Aorta (tissue), 5 donors: ENCODE measurements at regions of chr7 and their contacts with region 1.

Region 1: GRCh38 chr7:151110941-151111645 is 24.8 kb downstream of the AGAP3 start:
- DNase-seq: peak; percentile 83 to 93
- ATAC-seq: peak; percentile 83
- H3K4me3 ChIP-seq: no peak overlapping the region
- H3K27ac ChIP-seq: no peak overlapping the region
- H3K4me1 ChIP-seq: no peaks in the 10 kb centered on the region
- H3K27me3 ChIP-seq: no peaks in the 10 kb centered on the region

Region 2: GRCh38 chr7:150685219-150686029 is 425.7 kb before region 1 on chr7 and contains the start of gene GIMAP2:
- intact Hi-C with region 1: no loop called
- DNase-seq: no peak
- ATAC-seq: peak; percentile 73
- H3K4me3 ChIP-seq: no peak within 1 kb of the TSS
- H3K27ac ChIP-seq: no peak within 1 kb of the TSS
- H3K4me1 ChIP-seq: no peaks in the 10 kb centered on the region
- H3K27me3 ChIP-seq: no peaks in the 10 kb centered on the region
- total RNA-seq, gene GIMAP2: 11.5 to 24.7 TPM

Region 3: GRCh38 chr7:150898475-150899011 is 212.6 kb before region 1 on chr7:
- intact Hi-C with region 1: loop called (anchors 5 kb)
- DNase-seq: peak; percentile 79 to 94
- ATAC-seq: peak; percentile 84
- H3K4me3 ChIP-seq: no peak overlapping the region
- H3K27ac ChIP-seq: no peak overlapping the region
- H3K4me1 ChIP-seq: no peaks in the 10 kb centered on the region
- H3K27me3 ChIP-seq: no peaks in the 10 kb centered on the region

Region 4: GRCh38 chr7:150964593-150965111 is 146.4 kb before region 1 on chr7:
- intact Hi-C with region 1: loop called in 1 of 2 experiments (anchors 5 kb)
- DNase-seq: no peak
- ATAC-seq: no peak
- H3K4me3 ChIP-seq: no peak overlapping the region
- H3K27ac ChIP-seq: no peak overlapping the region
- H3K4me1 ChIP-seq: no peaks in the 10 kb centered on the region
- H3K27me3 ChIP-seq: peaks cover 0 to 2% of the 10 kb centered on the region in 2 donors

Region 5: GRCh38 chr7:151028131-151028947 is 82.8 kb before region 1 on chr7 and contains the start of gene ABCB8:
- intact Hi-C with region 1: loop called (anchors 5 kb)
- DNase-seq: peak; percentile 97 to 98
- ATAC-seq: peak; percentile 98
- H3K4me3 ChIP-seq: peak within 1 kb of the TSS; percentile 62 to 81
- H3K27ac ChIP-seq: peak within 1 kb of the TSS in 1 of 2 donors; percentile 11
- H3K4me1 ChIP-seq: no peaks in the 10 kb centered on the region
- H3K27me3 ChIP-seq: no peaks in the 10 kb centered on the region
- total RNA-seq, gene ABCB8: 18.7 to 30.8 TPM

Region 6: DNA sequence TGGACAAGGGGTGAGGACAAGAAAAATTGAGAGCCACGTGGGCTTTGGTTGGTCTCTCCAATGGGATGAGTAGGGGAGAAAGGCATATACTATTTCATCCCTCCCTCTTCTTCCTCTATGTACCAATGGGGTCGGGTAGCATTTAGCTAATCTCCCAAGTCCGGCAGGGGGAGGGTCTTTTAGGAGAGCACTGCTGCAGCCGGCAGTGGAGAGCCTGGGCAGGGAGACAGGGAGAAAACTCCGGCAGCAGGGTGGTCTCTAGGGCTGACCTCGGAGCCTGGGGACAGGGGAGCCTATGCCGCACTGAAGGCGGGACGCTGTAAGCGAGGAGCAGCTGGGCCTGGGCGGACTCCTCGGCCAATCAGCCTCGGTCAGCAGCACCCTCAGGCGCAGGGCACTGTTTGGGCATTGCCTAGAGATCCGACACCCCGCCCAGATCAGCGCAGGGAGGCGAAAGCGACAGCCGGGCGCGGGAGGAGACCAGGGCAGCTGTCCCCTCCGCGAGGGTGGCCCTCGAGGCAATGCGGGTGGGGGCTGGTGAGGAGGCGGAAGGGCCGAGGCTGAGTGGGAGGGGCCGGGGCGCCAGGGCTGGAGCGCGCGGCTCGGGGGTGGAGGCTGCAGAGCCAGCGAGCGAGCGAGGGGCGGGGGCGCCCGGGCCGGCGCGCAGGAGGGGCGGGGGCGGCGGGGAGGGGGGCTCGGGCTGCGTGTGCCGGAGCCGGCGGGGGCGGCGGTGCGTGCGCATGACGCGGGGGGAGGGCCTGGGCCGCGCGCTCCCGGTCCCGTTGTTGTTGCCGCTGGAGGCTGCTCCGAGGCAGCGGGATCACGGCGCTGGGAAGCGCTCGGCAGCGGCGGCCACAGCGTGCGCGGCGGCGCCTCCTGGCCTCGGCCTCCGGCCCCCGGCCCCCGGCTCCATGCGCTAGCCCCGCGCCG is 25.1 kb before region 1 on chr7 and contains the start of gene AGAP3:
- intact Hi-C with region 1: loop called (anchors 2 kb)
- DNase-seq: peak; percentile 94 to 95
- ATAC-seq: peak; percentile 82
- H3K4me3 ChIP-seq: peak within 1 kb of the TSS; percentile 33 to 84
- H3K27ac ChIP-seq: peak within 1 kb of the TSS in 1 of 2 donors; percentile 53
- H3K4me1 ChIP-seq: peaks cover 0 to 3% of the 10 kb centered on the region in 2 donors
- H3K27me3 ChIP-seq: no peaks in the 10 kb centered on the region
- total RNA-seq, gene AGAP3: 60.6 to 115 TPM

Region 7: GRCh38 chr7:151091431-151091830 is 19.7 kb before region 1 on chr7:
- intact Hi-C with region 1: loop called (anchors 2 kb)
- DNase-seq: no peak
- ATAC-seq: no peak
- H3K4me3 ChIP-seq: no peak overlapping the region
- H3K27ac ChIP-seq: no peak overlapping the region
- H3K4me1 ChIP-seq: no peaks in the 10 kb centered on the region
- H3K27me3 ChIP-seq: no peaks in the 10 kb centered on the region